Lower lobe of right lung (tissue), 2 donors: ENCODE measurements at regions of chr1 and their contacts with region 1.

Region 1: GRCh38 chr1:156445789-156446263 is 54.7 kb downstream of the MEF2D start:
- DNase-seq: peak; percentile 84
- ATAC-seq: peak; percentile 95 to 96
- H3K4me3 ChIP-seq: no peak overlapping the region
- H3K27ac ChIP-seq: no peak overlapping the region
- H3K4me1 ChIP-seq: peaks cover 5% of the 10 kb centered on the region
- H3K27me3 ChIP-seq: peaks cover 52% of the 10 kb centered on the region
- CTCF ChIP-seq: peak; percentile 95

Region 2: GRCh38 chr1:156385534-156386031 is 60.2 kb before region 1 on chr1:
- intact Hi-C with region 1: loop called (anchors 5 kb)
- DNase-seq: peak; percentile 61
- ATAC-seq: peak; percentile 49 to 54
- H3K4me3 ChIP-seq: no peak overlapping the region
- H3K27ac ChIP-seq: no peak overlapping the region
- H3K4me1 ChIP-seq: no peaks in the 10 kb centered on the region
- H3K27me3 ChIP-seq: peaks cover 48% of the 10 kb centered on the region
- CTCF ChIP-seq: peak; percentile 82